ENCODE measurements at regions of chr1 and their contacts with region 1.

Region 1: GRCh38 chr1:200386416-200386815 is 23.4 kb downstream of the ZNF281 start:
- DNase-seq: no peak
- H3K4me3 ChIP-seq: no peak overlapping the region
- H3K27me3 ChIP-seq: no peaks in the 10 kb centered on the region
- CTCF ChIP-seq: no peak

Region 2: DNA sequence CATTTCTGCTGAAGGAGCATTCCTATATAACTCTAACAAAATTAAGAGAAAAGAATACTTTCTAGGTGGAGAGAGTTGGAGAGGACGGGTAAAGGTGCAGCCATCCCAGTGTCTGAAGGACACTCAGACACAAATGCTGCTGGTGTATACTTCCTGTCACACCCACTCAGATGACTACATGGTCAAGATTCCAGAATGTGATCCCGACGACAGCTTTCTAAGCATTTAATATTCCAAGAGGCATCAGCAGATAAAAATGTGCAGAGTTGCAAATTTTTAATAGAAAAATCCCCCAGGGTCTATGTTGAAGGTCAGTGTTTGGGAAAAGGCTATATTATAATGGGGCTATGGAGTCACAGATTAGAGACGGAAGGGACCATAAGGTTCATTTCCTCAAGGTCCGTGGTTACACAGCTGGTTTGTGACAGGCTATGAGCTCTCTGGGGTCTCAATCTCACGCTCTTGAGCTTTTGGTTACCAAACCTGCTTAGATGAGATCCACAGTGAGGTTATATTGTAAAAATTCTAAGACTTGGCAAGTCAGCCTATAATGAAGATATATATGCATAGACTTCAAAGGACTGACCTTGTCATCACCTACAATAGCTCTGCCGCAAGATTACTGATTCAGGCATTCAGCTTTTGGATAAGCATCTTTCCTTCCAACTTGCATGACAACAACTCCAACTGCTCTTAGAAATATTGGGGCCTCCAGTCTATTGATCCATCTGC is 11.7 kb before region 1 on chr1:
- CTCF ChIA-PET with region 1: interaction called, 3 read pairs
- POLR2A ChIA-PET with region 1: interaction called, 10 read pairs
- DNase-seq: no peak
- H3K4me3 ChIP-seq: no peak overlapping the region
- H3K27me3 ChIP-seq: no peaks in the 10 kb centered on the region
- CTCF ChIP-seq: no peak

Region 3: DNA sequence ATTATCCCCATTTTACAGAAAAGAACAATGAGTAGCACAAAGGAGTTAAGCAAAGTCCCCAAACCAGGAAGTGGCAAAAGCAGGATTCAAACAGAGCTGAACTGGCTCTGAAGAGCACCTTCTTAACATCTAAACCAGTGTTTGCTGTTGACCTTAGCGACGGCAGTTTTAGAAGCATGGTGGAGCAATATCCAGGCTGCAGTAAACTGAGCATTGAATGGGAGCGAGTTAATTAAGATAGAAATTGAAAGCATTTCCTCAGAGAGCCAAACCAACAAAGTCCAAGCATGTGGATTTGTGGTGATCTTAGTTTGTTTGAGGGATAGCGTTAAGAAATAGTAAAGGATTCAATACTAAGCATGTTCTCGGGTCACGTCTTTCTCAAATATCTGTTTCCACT is 36.8 kb after region 1 on chr1:
- CTCF ChIA-PET with region 1: no interaction called
- POLR2A ChIA-PET with region 1: no interaction called
- DNase-seq: no peak
- H3K4me3 ChIP-seq: no peak overlapping the region
- H3K27me3 ChIP-seq: no peaks in the 10 kb centered on the region
- CTCF ChIP-seq: no peak

Region 4: DNA sequence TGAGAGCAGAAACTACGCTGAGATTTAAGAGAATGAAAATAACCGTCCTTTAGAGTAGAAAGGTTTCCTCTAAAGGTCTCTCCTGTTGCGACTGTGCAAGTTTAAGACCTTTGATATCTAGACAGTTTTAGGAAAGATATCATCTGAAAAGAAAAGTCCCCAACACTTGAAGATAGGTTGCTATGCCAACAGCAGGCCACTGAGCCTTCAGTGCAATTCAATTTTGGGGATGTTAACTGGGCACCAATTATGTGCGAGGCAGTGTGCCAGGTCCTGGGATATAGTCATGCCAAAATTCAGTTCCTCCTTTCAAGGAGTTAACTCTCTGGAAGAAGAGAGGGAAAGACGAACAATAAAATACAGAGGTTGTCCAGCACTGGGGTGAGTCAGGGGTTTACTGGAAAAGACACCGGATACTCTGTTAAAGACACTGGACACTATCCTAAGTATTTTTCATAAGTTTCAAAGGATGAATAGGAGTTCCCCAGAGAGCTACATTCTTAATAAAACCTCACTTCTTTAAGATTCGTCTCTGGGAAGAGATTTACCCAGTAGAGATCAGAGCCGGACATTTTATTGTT is 48.9 kb after region 1 on chr1:
- CTCF ChIA-PET with region 1: no interaction called
- POLR2A ChIA-PET with region 1: no interaction called
- DNase-seq: no peak
- H3K4me3 ChIP-seq: no peak overlapping the region
- H3K27me3 ChIP-seq: no peaks in the 10 kb centered on the region
- CTCF ChIP-seq: no peak